ENCODE measurements at regions of chr18 and their contacts with region 1.

Region 1: GRCh38 chr18:58928386-58928785 is 63.7 kb downstream of the ZNF532 start:
- DNase-seq: no peak
- H3K4me3 ChIP-seq: peak overlapping the region; percentile 9 to 12
- H3K27ac ChIP-seq: peak overlapping the region; percentile 49 to 50
- H3K4me1 ChIP-seq: peaks cover 0 to 60% (median 16%) of the 10 kb centered on the region in 4 donors
- H3K27me3 ChIP-seq: no peaks in the 10 kb centered on the region
- CTCF ChIP-seq: no peak

Region 2: GRCh38 chr18:58958628-58959027 is 30.2 kb after region 1 on chr18:
- intact Hi-C with region 1: loop called (anchors 2 kb)
- DNase-seq: no peak
- H3K4me3 ChIP-seq: no peak overlapping the region
- H3K27ac ChIP-seq: no peak overlapping the region
- H3K4me1 ChIP-seq: peaks cover 0 to 6% (median 0%) of the 10 kb centered on the region in 4 donors
- H3K27me3 ChIP-seq: no peaks in the 10 kb centered on the region
- CTCF ChIP-seq: no peak